Astrocyte of the cerebellum (primary cell): ENCODE measurements at regions of chr12 and their contacts with region 1.

Region 1: GRCh38 chr12:15979096-15980092 is 68.3 kb downstream of the DERA start:
- DNase-seq: peak; percentile 92
- H3K4me3 ChIP-seq: no peak overlapping the region
- CTCF ChIP-seq: peak; percentile 71

Region 2: DNA sequence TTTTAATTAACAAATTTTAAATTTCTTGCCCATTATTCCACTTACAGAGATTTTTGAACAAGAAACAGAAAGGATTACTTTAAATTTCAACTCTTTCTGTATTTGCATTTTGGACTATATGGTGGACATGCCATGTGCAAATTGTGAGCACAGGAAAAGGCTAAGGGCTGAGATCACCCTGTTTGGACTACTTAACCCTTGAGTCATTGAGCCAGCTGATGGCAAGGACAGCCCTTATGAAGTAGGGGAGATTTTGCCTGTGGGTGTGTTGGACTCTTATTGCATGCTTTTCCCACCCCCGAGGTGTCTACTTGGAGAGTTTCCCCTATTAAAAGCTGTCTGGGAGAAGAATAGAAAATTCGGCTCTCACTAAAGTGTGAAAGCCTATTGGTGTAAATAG is 51.0 kb before region 1 on chr12:
- in situ Hi-C with region 1: loop called (anchors 5 kb)
- DNase-seq: peak; percentile 19
- H3K4me3 ChIP-seq: no peak overlapping the region
- CTCF ChIP-seq: no peak